Activated B cell treated with CpG ODN at 0.5 μM for 24 hours (primary cell): ENCODE measurements at regions of chr7 and their contacts with region 1.

Region 1: GRCh38 chr7:39732837-39733804 is 109.7 kb downstream of the RALA start:
- DNase-seq: peak; percentile 95
- ATAC-seq: peak; percentile 89
- H3K4me3 Mint-ChIP-seq: peak overlapping the region; percentile 89
- H3K27ac Mint-ChIP-seq: peak overlapping the region; percentile 94
- H3K4me1 Mint-ChIP-seq: peaks cover 52% of the 10 kb centered on the region
- H3K27me3 Mint-ChIP-seq: no peaks in the 10 kb centered on the region
- CTCF ChIP-seq: no peak

Region 2: GRCh38 chr7:38178004-38178694 is 1555.0 kb before region 1 on chr7 and contains the start of gene STARD3NL:
- CTCF ChIA-PET with region 1: no interaction called
- POLR2A ChIA-PET with region 1: no interaction called
- intact Hi-C with region 1: loop called (anchors 10 kb)
- DNase-seq: peak; percentile 81
- ATAC-seq: peak; percentile 96
- H3K4me3 Mint-ChIP-seq: peak within 1 kb of the TSS; percentile 97
- H3K27ac Mint-ChIP-seq: peak within 1 kb of the TSS; percentile 93
- H3K4me1 Mint-ChIP-seq: peaks cover 36% of the 10 kb centered on the region
- H3K27me3 Mint-ChIP-seq: no peaks in the 10 kb centered on the region
- CTCF ChIP-seq: no peak
- total RNA-seq, gene STARD3NL: 16.2 and 17.4 TPM in 2 replicates

Region 3: GRCh38 chr7:39566023-39566921 is 166.8 kb before region 1 on chr7 and contains the start of gene YAE1:
- CTCF ChIA-PET with region 1: no interaction called
- POLR2A ChIA-PET with region 1: interaction called, 11 read pairs
- intact Hi-C with region 1: loop called (anchors 1 kb)
- DNase-seq: peak; percentile 79
- ATAC-seq: peak; percentile 96
- H3K4me3 Mint-ChIP-seq: peak within 1 kb of the TSS; percentile 99
- H3K27ac Mint-ChIP-seq: peak within 1 kb of the TSS; percentile 91
- H3K4me1 Mint-ChIP-seq: peaks cover 22% of the 10 kb centered on the region
- H3K27me3 Mint-ChIP-seq: peaks cover 1% of the 10 kb centered on the region
- CTCF ChIP-seq: no peak
- total RNA-seq, gene YAE1: 13.3 and 16.1 TPM in 2 replicates

Region 4: DNA sequence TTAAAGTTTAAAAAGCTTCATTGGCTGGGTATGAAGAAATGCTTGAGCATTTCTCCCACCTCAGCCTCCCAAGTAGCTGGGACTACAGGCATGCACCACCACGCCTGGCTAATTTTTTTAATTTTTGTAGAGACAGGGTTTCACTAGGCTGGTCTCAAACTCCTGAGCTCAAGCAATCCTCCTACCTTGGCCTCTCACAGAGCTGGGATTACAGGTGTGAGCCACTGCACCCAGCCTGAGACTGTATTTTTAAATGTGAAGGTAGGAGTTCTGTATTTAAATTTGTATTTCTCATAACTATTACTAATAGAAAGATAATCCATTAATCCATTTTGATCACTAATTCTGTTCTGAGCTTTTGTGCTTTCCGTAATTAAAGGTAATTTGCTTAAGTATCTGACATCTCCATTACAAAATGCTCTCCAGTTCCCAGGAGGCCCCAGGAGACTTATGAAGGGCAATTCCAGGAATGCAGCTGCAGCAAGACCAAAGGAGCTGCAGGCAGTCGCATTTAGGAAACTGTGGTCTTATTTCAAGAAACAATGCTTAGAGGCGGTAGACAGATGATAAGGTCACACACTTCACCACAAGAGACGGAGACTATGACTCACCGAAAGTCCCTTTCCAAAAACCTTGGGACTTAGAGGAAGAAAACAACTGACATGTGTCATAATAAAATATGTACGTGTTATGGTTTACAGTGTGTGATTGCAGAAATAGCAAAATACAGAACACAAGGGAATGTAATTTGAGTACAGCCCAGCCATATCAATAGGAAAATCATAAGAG is 143.6 kb before region 1 on chr7:
- CTCF ChIA-PET with region 1: no interaction called
- POLR2A ChIA-PET with region 1: interaction called, 13 read pairs
- intact Hi-C with region 1: no loop called
- DNase-seq: no peak
- ATAC-seq: peak; percentile 77
- H3K4me3 Mint-ChIP-seq: no peak overlapping the region
- H3K27ac Mint-ChIP-seq: peak overlapping the region; percentile 2
- H3K4me1 Mint-ChIP-seq: peaks cover 12% of the 10 kb centered on the region
- H3K27me3 Mint-ChIP-seq: no peaks in the 10 kb centered on the region
- CTCF ChIP-seq: no peak

Region 5: GRCh38 chr7:39746103-39746819 is 13.1 kb after region 1 on chr7:
- CTCF ChIA-PET with region 1: interaction called, 14 read pairs
- POLR2A ChIA-PET with region 1: interaction called, 4 read pairs
- intact Hi-C with region 1: loop called (anchors 1 kb)
- DNase-seq: no peak
- ATAC-seq: peak; percentile 61
- H3K4me3 Mint-ChIP-seq: no peak overlapping the region
- H3K27ac Mint-ChIP-seq: no peak overlapping the region
- H3K4me1 Mint-ChIP-seq: peaks cover 19% of the 10 kb centered on the region
- H3K27me3 Mint-ChIP-seq: no peaks in the 10 kb centered on the region
- CTCF ChIP-seq: no peak